Mucosa of descending colon (tissue), 3 donors: ENCODE measurements at regions of chr17 and their contacts with region 1.

Region 1: DNA sequence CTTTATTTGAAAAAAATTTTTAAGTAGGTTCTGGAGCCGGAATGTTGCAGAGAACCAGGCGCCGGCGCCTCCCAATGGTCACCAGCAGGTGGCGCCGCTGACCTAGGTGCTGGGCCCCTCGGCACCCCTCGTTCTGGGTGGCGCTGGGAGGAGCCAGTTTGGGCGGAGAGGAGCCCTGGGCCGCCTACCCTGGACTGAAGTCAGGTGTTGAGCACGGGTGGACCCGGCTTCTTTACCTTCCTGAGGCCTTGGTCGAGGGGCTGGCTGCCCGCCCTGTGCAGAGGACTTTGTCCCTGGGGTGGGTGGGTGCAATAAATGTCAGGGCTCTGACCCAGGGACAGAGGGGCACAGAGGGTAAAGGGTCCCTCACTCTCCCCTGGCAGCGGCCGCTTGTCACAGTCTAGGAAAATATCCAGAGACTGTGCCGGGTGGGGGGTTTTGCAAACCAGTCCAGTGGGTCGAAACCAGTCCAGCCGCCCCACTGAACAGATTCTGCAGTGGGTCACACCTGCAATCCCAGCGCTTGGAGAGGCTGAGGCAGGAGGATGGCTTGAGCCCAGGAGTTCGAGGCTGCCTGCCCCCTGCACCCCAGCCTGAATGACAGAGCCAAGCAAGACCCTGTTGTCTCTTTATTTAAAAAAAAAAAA is 30.1 kb upstream of the TNFRSF13B start:
- DNase-seq: peak; percentile 81 to 86 (median 86)
- ATAC-seq: peak; percentile 95
- H3K4me3 ChIP-seq: no peak overlapping the region
- H3K4me1 ChIP-seq: peaks cover 6% of the 10 kb centered on the region
- CTCF ChIP-seq: peak; percentile 94

Region 2: DNA sequence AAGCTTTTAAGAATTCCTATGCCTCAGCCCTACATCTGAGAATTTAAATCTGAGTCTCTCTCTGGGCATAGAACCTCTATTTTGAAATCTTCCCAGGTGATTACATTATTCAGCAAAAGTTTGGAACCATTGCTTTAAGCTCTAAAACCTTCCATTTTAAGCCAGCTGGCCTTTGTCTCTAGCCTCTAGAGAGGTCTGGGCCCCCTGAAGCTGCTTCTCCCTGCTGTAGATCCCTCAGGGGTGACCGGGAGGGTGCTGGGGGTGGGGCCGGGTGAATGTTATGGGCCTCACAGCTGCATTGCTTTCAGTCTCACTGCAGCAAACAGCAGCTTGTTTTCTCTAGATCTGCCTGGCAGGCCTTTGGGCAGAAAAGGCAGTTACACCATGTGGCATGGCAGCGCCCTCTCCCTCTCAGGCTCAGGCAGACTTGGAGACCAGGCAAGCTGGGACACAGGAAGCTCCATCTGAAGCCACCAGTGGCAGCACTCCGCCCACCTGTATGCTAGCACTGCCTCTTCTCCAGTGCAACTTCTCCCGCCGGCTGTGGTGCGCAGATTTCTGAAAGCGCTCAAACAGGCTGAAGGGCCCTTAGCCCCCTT is 106.6 kb after region 1 on chr17:
- intact Hi-C with region 1: no loop called
- DNase-seq: peak; percentile 63 to 70 (median 65)
- ATAC-seq: peak; percentile 60
- H3K4me3 ChIP-seq: no peak overlapping the region
- H3K4me1 ChIP-seq: peaks cover 42% of the 10 kb centered on the region
- CTCF ChIP-seq: no peak

Region 3: GRCh38 chr17:17141860-17142552 is 140.0 kb after region 1 on chr17:
- intact Hi-C with region 1: loop called in 1 of 2 experiments (anchors 10 kb)
- DNase-seq: peak in 1 of 3 donors; percentile 18
- ATAC-seq: peak; percentile 30
- H3K4me3 ChIP-seq: no peak overlapping the region
- H3K4me1 ChIP-seq: no peaks in the 10 kb centered on the region
- CTCF ChIP-seq: peak; percentile 14

Region 4: GRCh38 chr17:17156107-17156506 is 154.1 kb after region 1 on chr17:
- intact Hi-C with region 1: no loop called
- DNase-seq: no peak
- ATAC-seq: no peak
- H3K4me3 ChIP-seq: no peak overlapping the region
- H3K4me1 ChIP-seq: no peaks in the 10 kb centered on the region
- CTCF ChIP-seq: no peak